Endothelial cell of umbilical vein (primary cell): ENCODE measurements at regions of chr6 and their contacts with region 1.

Region 1: DNA sequence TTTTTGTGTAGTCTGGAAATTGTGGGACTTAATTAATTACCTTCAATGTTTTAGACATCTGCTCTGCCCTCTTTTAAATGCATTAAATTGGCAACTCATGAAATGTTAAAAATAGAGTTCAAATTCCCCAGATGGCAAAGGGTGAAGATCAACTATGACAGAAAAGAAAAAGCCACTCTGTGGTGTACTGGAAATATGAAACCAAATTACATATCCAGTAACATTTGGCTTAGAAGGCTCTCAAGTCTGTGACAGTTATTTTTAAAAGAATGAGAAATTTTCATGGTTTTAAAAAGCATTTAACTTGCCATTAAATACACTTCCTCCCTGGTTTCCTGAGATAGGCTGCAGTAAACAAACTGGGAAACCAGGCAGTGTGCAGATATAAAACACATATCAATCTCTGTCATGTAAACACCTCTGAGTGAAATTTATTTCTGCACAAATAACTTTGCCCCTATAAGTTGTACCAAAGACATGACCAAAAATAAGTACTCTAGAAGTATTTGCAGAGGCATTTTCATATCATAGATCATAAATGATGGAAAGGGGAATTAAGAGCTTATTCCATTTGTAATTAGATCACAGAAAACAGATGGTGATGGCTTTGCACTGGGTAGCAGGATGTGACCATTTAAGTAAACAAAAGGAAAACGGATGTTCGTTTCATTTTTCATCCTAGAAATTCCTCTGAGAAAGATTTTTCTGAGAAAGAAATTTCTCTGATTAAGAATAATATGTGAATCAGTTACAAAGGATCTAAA is 360.1 kb downstream of the SAMD5 start:
- DNase-seq: peak; percentile 80
- H3K4me3 ChIP-seq: peak overlapping the region in 1 of 3 experiments; percentile 32
- H3K27ac ChIP-seq: peak overlapping the region; percentile 90
- H3K4me1 ChIP-seq: peaks cover 34% of the 10 kb centered on the region
- H3K27me3 ChIP-seq: no peaks in the 10 kb centered on the region
- CTCF ChIP-seq: no peak
- POLR2A ChIP-seq: no peak

Region 2: DNA sequence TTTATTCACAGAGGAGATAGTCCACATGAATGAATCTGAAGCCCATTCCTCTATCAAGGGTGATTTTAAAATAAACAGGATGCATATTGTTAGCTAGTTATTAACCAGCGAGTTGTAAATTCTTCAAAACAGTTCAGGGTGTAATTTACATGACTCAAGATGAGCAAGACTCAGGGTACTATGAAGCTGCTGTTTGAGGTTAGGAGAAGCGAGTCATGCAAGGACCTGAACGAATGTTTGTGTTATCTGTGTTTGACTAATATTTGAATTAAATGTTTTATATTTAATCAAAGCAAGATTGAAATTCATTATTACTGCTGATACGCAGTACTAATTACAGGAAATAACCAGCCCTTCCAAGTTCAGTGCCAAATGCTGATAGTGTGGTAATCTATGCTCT is 169.0 kb before region 1 on chr6:
- CTCF ChIA-PET with region 1: no interaction called
- POLR2A ChIA-PET with region 1: no interaction called
- dilution Hi-C with region 1: no loop called
- intact Hi-C with region 1: loop called (anchors 5 kb)
- DNase-seq: peak; percentile 55
- H3K4me3 ChIP-seq: no peak overlapping the region
- H3K27ac ChIP-seq: no peak overlapping the region
- H3K4me1 ChIP-seq: peaks cover 18% of the 10 kb centered on the region
- H3K27me3 ChIP-seq: no peaks in the 10 kb centered on the region
- CTCF ChIP-seq: no peak
- POLR2A ChIP-seq: no peak

Region 3: GRCh38 chr6:148064406-148065134 is 196.0 kb after region 1 on chr6:
- CTCF ChIA-PET with region 1: no interaction called
- POLR2A ChIA-PET with region 1: no interaction called
- dilution Hi-C with region 1: no loop called
- intact Hi-C with region 1: loop called (anchors 10 kb)
- DNase-seq: peak; percentile 90
- H3K4me3 ChIP-seq: no peak overlapping the region
- H3K27ac ChIP-seq: peak overlapping the region; percentile 96
- H3K4me1 ChIP-seq: peaks cover 32% of the 10 kb centered on the region
- H3K27me3 ChIP-seq: no peaks in the 10 kb centered on the region
- CTCF ChIP-seq: no peak
- POLR2A ChIP-seq: no peak

Region 4: GRCh38 chr6:148090326-148090725 is 221.7 kb after region 1 on chr6:
- CTCF ChIA-PET with region 1: interaction called, 3 read pairs
- POLR2A ChIA-PET with region 1: no interaction called
- dilution Hi-C with region 1: no loop called
- intact Hi-C with region 1: loop called (anchors 2 kb)
- DNase-seq: peak; percentile 85
- H3K4me3 ChIP-seq: no peak overlapping the region
- H3K27ac ChIP-seq: peak overlapping the region; percentile 55
- H3K4me1 ChIP-seq: peaks cover 13% of the 10 kb centered on the region
- H3K27me3 ChIP-seq: no peaks in the 10 kb centered on the region
- CTCF ChIP-seq: no peak
- POLR2A ChIP-seq: no peak

Region 5: DNA sequence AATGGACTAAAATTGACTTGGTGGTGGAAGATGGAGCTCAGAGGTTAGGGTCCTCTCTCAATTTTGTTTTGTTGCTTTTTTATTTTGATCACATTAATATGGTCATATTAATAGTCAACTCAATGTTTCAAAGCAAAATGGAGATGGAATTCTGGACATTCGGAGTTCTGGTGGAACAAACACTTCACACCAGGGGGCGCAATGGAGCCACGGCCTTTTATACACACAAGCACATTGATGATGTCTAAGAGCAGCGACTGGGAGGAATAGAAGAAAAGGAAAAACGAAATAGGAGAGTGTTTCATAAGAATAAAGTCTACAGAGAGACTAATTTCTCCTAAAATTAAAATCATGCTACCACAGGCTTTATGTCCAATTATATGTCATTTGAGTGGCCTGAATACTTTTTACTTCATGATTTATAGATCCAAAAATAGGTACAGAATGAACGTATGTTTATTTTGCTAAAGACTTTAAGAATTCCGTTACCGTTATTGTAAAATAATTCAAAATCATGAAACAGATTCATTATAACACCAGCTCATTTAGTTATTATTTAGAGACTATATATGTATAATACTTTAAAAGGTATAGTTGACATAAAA is 276.4 kb after region 1 on chr6:
- CTCF ChIA-PET with region 1: no interaction called
- POLR2A ChIA-PET with region 1: no interaction called
- dilution Hi-C with region 1: no loop called
- intact Hi-C with region 1: loop called (anchors 1 kb)
- DNase-seq: peak; percentile 74
- H3K4me3 ChIP-seq: no peak overlapping the region
- H3K27ac ChIP-seq: peak overlapping the region; percentile 99
- H3K4me1 ChIP-seq: peaks cover 41% of the 10 kb centered on the region
- H3K27me3 ChIP-seq: no peaks in the 10 kb centered on the region
- CTCF ChIP-seq: peak; percentile 75 to 81
- POLR2A ChIP-seq: no peak

Region 6: GRCh38 chr6:149129371-149130077 is 1260.9 kb after region 1 on chr6:
- CTCF ChIA-PET with region 1: no interaction called
- POLR2A ChIA-PET with region 1: no interaction called
- dilution Hi-C with region 1: no loop called
- intact Hi-C with region 1: no loop called
- DNase-seq: no peak
- H3K4me3 ChIP-seq: no peak overlapping the region
- H3K27ac ChIP-seq: no peak overlapping the region
- H3K4me1 ChIP-seq: peaks cover 3% of the 10 kb centered on the region
- H3K27me3 ChIP-seq: peaks cover 0 to 9% of the 10 kb centered on the region in 2 experiments
- CTCF ChIP-seq: no peak
- POLR2A ChIP-seq: no peak